ENCODE measurements at regions of chr3 and their contacts with region 1.

Region 1: DNA sequence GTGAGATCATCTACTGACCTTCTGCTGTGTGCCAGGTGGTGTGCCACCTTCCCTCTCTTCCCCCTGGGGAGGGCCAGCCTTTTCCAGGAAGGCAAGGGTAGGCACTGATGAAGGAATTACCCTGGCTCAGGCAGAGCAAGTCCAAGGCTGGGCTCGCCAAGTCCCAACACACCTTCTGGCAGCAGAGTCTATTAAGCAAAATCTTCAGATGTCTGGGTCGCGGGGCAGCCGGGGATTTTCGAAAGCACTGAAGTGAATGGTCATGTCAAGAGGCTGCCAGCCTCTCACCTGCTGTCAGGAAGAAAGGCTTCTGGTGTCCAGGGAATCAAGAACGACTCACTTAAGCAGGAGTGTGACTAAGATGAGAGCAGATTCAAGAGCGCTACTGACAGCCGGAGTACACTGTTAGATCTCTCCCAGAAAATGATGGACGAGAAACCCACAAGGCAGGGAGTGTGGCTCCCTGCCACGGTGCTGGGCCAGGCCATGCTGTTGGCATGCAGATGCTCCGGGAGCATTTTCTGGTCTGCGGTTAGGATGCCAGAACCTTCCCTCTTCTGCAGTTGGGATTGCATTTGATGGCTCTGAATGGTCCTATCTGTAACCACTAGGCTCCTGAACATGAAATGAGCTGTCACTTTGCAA is 479.8 kb downstream of the SHQ1 start:
- DNase-seq: no peak
- ATAC-seq: no peak
- H3K4me3 ChIP-seq: no peak overlapping the region
- H3K27ac ChIP-seq: no peak overlapping the region
- H3K4me1 ChIP-seq: no peaks in the 10 kb centered on the region
- H3K27me3 ChIP-seq: no peaks in the 10 kb centered on the region
- CTCF ChIP-seq: no peak

Region 2: GRCh38 chr3:71659864-71660591 is 708.4 kb before region 1 on chr3:
- CTCF ChIA-PET with region 1: no interaction called
- POLR2A ChIA-PET with region 1: interaction called, 15 read pairs
- in situ Hi-C with region 1: no loop called
- intact Hi-C with region 1: no loop called
- DNase-seq: no peak
- ATAC-seq: no peak
- H3K4me3 ChIP-seq: no peak overlapping the region
- H3K27ac ChIP-seq: no peak overlapping the region
- H3K4me1 ChIP-seq: no peaks in the 10 kb centered on the region
- H3K27me3 ChIP-seq: no peaks in the 10 kb centered on the region
- CTCF ChIP-seq: no peak

Region 3: DNA sequence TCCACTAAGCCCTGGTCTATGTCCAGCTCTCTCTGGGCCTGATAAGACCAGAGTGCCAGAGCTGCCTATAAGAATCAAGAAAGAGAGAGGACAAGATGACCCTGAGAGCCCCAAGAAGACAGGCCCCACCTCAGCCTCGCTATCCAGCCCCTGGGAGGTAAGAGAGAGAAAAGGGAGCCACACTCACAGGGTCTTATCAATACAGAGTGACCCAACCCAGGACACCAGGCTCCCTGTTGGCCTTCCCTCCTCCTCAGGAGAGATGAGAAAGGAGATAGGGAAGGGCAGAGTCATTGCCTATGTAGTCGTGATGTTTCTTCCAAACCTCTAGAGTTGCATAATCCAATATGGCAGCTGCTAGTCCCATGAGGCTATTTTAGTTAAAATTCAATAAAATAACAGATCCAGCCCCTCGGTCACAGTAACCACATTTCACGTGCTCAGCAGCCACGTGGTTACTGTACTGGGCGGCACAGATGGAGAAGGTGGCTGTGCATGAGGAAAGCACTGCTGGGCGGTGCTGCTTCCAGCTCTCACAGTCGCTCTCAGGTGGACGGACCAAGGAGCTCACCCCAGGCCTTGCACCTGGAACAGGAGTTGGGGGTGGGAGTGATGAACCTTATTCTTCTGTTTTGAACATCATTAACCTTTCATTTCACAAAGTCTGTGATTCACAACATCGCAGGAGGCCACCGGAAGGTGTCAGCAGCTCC is 46.0 kb before region 1 on chr3:
- CTCF ChIA-PET with region 1: interaction called, 11 read pairs
- POLR2A ChIA-PET with region 1: no interaction called
- in situ Hi-C with region 1: no loop called
- intact Hi-C with region 1: no loop called
- DNase-seq: no peak
- ATAC-seq: no peak
- H3K4me3 ChIP-seq: no peak overlapping the region
- H3K27ac ChIP-seq: no peak overlapping the region
- H3K4me1 ChIP-seq: no peaks in the 10 kb centered on the region
- H3K27me3 ChIP-seq: no peaks in the 10 kb centered on the region
- CTCF ChIP-seq: no peak

Measured in Panc1 (cell line).